HCT116 (cell line): ENCODE measurements at regions of chr11 and their contacts with region 1.

Region 1: GRCh38 chr11:68632802-68633201 is 51.5 kb upstream of the GAL start:
- DNase-seq: peak; percentile 79
- ATAC-seq: peak; percentile 100
- H3K4me3 ChIP-seq: no peak overlapping the region
- H3K27ac ChIP-seq: no peak overlapping the region
- H3K4me1 ChIP-seq: no peaks in the 10 kb centered on the region
- H3K27me3 ChIP-seq: no peaks in the 10 kb centered on the region
- CTCF ChIP-seq: peak; percentile 74 to 92 (median 89)
- POLR2A ChIP-seq: no peak
- RAD21 ChIP-seq: peak; percentile 97

Region 2: GRCh38 chr11:68798221-68798813 is 165.5 kb after region 1 on chr11:
- CTCF ChIA-PET with region 1: interaction called, 24 read pairs
- POLR2A ChIA-PET with region 1: interaction called, 3 read pairs
- RAD21 ChIA-PET with region 1: interaction called in 1 of 2 experiments, 3 read pairs
- intact Hi-C with region 1: loop called (anchors 1 kb)
- DNase-seq: no peak
- ATAC-seq: peak; percentile 74
- H3K4me3 ChIP-seq: no peak overlapping the region
- H3K27ac ChIP-seq: no peak overlapping the region
- H3K4me1 ChIP-seq: no peaks in the 10 kb centered on the region
- H3K27me3 ChIP-seq: no peaks in the 10 kb centered on the region
- CTCF ChIP-seq: peak; percentile 41 to 85 (median 82); a peak in 5 of 6 replicates
- POLR2A ChIP-seq: no peak
- RAD21 ChIP-seq: peak; percentile 55

Region 3: DNA sequence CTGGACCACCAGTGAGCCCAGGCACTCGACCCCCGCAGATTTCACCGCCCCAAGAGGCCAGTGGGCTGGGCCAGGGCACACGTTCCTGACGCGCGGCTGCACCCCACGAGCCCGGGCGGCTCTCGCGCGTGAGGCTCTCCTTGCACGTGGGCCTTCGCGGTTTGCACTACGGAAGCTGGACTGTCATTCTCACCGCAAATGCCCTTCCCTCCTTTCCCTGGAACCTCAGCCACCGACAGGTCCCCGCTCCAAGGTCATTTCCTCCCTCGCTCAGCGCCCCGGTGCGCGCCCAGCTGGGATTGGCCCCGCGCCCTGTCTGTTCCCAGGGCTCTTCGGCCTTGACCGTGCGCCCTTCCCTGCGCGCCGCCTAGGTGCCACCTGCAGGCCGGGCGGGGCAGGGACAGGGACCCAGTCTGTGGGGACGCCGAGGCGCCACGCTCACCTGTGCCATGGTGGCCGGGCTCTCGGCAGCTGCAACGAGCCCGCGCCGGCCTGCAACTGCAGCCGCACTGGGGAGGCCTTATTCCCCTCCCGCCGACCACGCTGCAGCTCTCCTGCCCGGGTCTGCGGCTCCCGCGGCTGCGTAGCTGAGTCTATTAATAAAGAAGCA is 211.0 kb after region 1 on chr11:
- CTCF ChIA-PET with region 1: interaction called, 13 read pairs
- POLR2A ChIA-PET with region 1: no interaction called
- RAD21 ChIA-PET with region 1: interaction called in 1 of 2 experiments, 4 read pairs
- intact Hi-C with region 1: loop called (anchors 2 kb)
- DNase-seq: peak; percentile 67
- ATAC-seq: peak; percentile 86
- H3K4me3 ChIP-seq: peak overlapping the region; percentile 41 to 55
- H3K27ac ChIP-seq: peak overlapping the region; percentile 27
- H3K4me1 ChIP-seq: peaks cover 21 to 41% of the 10 kb centered on the region in 2 experiments
- H3K27me3 ChIP-seq: no peaks in the 10 kb centered on the region
- CTCF ChIP-seq: peak; percentile 58 to 74 (median 71)
- POLR2A ChIP-seq: no peak
- RAD21 ChIP-seq: peak; percentile 84

Region 4: GRCh38 chr11:68950268-68950667 is 317.5 kb after region 1 on chr11:
- CTCF ChIA-PET with region 1: interaction called, 8 read pairs
- POLR2A ChIA-PET with region 1: no interaction called
- RAD21 ChIA-PET with region 1: no interaction called
- intact Hi-C with region 1: loop called (anchors 2 kb)
- DNase-seq: peak; percentile 15
- ATAC-seq: peak; percentile 90
- H3K4me3 ChIP-seq: no peak overlapping the region
- H3K27ac ChIP-seq: no peak overlapping the region
- H3K4me1 ChIP-seq: no peaks in the 10 kb centered on the region
- H3K27me3 ChIP-seq: no peaks in the 10 kb centered on the region
- CTCF ChIP-seq: peak; percentile 17 to 52 (median 52); a peak in 5 of 6 replicates
- POLR2A ChIP-seq: no peak
- RAD21 ChIP-seq: peak; percentile 26; the same call in 1 of the 2 replicates